Mammary epithelial cell (primary cell): ENCODE measurements at regions of chr11 and their contacts with region 1.

Region 1: DNA sequence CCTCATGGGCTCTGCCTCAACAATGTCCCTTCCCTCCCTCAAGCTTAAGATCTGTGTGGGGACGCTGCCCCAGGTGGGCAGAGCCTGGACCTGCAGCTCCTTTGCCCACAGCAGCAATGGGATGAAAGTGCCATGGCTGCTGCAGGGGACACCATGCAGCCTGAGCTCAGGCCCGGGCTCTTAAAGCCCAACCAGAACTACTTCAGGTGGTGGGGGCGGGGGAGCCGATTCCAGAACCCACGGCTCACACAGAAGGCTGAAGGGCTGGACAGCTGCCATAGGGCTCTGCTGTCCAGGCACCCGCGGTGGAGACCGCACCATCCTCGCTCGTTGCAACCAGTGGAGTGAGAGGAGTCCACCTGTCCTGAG is 12.5 kb downstream of the CHID1 start:
- DNase-seq: no peak
- H3K4me3 ChIP-seq: no peak overlapping the region
- H3K27ac ChIP-seq: no peak overlapping the region
- H3K4me1 ChIP-seq: no peaks in the 10 kb centered on the region
- H3K27me3 ChIP-seq: no peaks in the 10 kb centered on the region
- CTCF ChIP-seq: peak; percentile 34 to 38

Region 2: GRCh38 chr11:832321-833113 is 65.6 kb before region 1 on chr11 and contains the start of gene CD151:
- CTCF ChIA-PET with region 1: no interaction called
- dilution Hi-C with region 1: no loop called
- in situ Hi-C with region 1: no loop called
- intact Hi-C with region 1: no loop called
- DNase-seq: peak; percentile 63
- H3K4me3 ChIP-seq: peak within 1 kb of the TSS; percentile 74 to 93 (median 79)
- H3K27ac ChIP-seq: peak within 1 kb of the TSS; percentile 92
- H3K4me1 ChIP-seq: peaks cover 67% of the 10 kb centered on the region
- H3K27me3 ChIP-seq: no peaks in the 10 kb centered on the region
- CTCF ChIP-seq: no peak
- total RNA-seq, gene CD151: 387 to 511 TPM

Region 3: DNA sequence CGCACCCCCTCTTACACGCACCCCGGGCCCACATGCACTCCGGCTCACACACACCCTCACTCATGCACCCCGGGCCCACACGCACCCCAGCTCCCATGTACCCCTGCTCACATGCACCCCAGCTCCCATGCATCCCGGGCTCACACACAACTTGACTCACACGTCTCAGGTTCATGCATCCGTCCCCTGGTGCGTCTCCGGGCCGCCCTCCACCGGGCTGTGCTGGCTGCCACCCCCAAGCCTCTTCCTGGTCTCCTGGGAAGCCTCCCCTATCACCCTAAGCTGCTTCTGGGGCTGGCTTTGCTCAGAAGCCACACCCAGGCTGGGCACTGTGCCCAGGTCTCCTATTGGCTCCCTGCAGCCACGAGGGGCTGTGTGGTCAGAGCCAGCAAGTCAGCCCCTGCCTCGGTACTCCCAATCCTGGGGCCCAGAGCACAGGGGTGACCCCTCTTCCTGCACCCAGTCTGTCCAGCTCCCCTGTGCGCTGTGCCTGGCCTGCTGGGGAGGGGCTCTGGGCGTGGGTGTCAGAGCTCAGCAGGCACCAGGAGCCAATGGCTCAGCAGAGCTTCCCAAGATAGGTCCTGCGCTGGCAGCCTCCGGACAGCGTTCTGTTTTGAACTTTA is 38.5 kb before region 1 on chr11:
- CTCF ChIA-PET with region 1: no interaction called
- dilution Hi-C with region 1: loop called (anchors 5 kb)
- in situ Hi-C with region 1: no loop called
- intact Hi-C with region 1: no loop called
- DNase-seq: peak; percentile 67
- H3K4me3 ChIP-seq: no peak overlapping the region
- H3K27ac ChIP-seq: no peak overlapping the region
- H3K4me1 ChIP-seq: peaks cover 13% of the 10 kb centered on the region
- H3K27me3 ChIP-seq: no peaks in the 10 kb centered on the region
- CTCF ChIP-seq: no peak

Region 4: DNA sequence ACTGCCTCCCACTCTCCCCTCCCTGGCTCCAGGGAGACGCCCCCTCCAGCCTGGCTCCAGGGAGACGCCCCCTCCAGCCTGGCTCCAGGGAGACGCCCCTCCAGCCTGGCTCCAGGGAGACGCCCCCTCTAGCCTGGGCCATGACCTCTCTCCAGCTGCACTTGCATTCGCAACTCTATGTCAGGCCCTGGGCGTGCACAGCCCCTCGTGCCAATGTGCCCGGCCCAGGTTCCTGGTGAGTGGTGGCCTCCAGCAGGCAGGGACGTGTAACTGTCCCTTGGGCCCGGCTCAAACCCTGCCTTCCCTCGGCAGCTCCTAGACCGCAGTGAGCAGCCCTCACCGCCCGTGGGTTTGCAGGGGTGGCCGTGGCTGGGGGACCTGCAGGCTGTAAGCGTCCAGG is 131.5 kb after region 1 on chr11:
- CTCF ChIA-PET with region 1: no interaction called
- dilution Hi-C with region 1: loop called (anchors 10 kb)
- in situ Hi-C with region 1: no loop called
- intact Hi-C with region 1: no loop called
- DNase-seq: no peak
- H3K4me3 ChIP-seq: no peak overlapping the region
- H3K27ac ChIP-seq: no peak overlapping the region
- H3K4me1 ChIP-seq: no peaks in the 10 kb centered on the region
- H3K27me3 ChIP-seq: peaks cover 2% of the 10 kb centered on the region
- CTCF ChIP-seq: no peak